CD14-positive monocyte (primary cell): ENCODE measurements at regions of chr9 and their contacts with region 1.

Region 1: DNA sequence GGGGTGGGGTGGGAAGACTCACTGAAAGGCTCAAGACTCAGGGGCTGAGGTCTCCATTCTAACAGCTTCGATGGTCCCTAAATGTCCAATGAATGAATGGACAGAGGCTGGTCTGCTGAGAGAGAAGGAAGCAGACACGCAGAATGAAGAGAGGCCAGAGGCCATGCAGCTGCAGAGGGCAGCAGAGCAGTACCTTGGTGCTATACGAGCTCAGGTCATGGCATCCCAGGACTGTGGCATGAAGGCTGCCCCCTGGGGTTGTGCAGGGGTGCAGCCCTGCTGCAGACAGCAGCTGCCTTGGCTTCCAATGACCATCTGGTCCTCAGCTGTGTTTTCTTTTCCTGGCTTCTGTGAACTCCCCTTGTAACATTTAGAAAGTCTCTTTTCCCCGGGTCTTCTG is 15.2 kb upstream of the CORO2A start:
- DNase-seq: no peak
- H3K4me3 ChIP-seq: no peak overlapping the region
- H3K4me3 Mint-ChIP-seq: no peak overlapping the region
- H3K27ac ChIP-seq: peak overlapping the region in 1 of 2 donors; percentile 15
- H3K27ac Mint-ChIP-seq: peak overlapping the region in 5 of 7 donors; percentile 64 to 78 (median 68)
- H3K4me1 ChIP-seq: no peaks in the 10 kb centered on the region
- H3K4me1 Mint-ChIP-seq: peaks cover 6% of the 10 kb centered on the region
- H3K27me3 ChIP-seq: no peaks in the 10 kb centered on the region
- H3K27me3 Mint-ChIP-seq: peaks cover 0 to 2% (median 0%) of the 10 kb centered on the region in 3 donors
- CTCF ChIP-seq: no peak

Region 2: GRCh38 chr9:98074115-98074990 is 133.3 kb before region 1 on chr9:
- intact Hi-C with region 1: loop called (anchors 5 to 10 kb)
- DNase-seq: peak; percentile 38 to 60 (median 58)
- H3K4me3 ChIP-seq: no peak overlapping the region
- H3K4me3 Mint-ChIP-seq: no peak overlapping the region
- H3K27ac ChIP-seq: peak overlapping the region in 1 of 2 donors; percentile 23
- H3K27ac Mint-ChIP-seq: peak overlapping the region; percentile 56 to 79 (median 75)
- H3K4me1 ChIP-seq: peaks cover 23 to 25% of the 10 kb centered on the region in 2 donors
- H3K4me1 Mint-ChIP-seq: peaks cover 34% of the 10 kb centered on the region
- H3K27me3 ChIP-seq: no peaks in the 10 kb centered on the region
- H3K27me3 Mint-ChIP-seq: peaks cover 0 to 3% (median 0%) of the 10 kb centered on the region in 3 donors
- CTCF ChIP-seq: peak; percentile 99